ENCODE measurements at regions of chr1 and their contacts with region 1.

Region 1: DNA sequence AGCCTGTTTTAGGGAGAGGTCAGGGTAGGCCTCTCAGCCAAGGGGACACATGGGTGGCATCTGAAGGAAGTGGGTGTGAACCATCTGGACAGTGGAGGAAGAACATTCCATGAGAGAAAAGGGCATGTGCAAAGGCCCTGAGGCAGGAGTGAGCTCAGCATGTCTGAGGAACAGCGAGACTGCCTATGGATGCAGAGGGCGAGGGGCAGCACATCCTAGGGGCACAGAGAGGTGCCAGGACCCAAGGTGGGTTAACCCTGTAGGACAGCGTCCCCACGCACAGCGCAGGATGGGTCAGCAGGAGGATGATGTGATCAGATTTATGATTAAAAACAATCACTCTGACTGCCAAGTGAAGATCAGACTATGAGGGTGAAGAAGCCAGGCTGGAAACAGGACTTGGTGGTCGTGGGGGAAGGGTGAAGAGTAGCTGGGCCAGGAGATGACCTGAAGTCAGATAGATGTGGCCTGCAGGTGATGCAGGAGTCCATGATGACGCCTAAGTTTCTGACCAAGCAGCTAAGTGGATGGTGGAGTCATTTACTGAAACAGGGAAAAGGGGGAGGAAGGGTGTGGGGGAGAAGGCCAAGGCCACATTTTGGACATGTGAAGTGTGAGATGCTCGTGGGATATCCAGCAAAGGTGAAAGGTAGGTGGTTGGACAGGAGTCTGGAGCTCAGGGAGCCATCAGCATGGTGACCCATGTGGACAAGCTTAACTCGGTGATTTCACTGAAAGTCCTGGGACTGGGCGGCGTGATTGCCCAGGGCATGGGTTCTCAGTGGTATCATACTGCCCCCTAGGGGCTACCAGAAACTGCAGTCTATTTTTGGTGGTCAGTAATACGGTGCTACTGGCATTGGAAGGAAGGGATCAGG is 37.8 kb downstream of the PABPC4 start:
- DNase-seq: peak in 4 of 5 donors; percentile 71 to 72 (median 72)
- ATAC-seq: peak; percentile 76 to 86 (median 82)
- H3K4me3 ChIP-seq: no peak overlapping the region
- H3K27ac ChIP-seq: no peak overlapping the region
- H3K4me1 ChIP-seq: peaks cover 0 to 30% (median 12%) of the 10 kb centered on the region in 12 donors
- H3K27me3 ChIP-seq: no peaks in the 10 kb centered on the region
- CTCF ChIP-seq: peak; percentile 85 to 95 (median 92)
- POLR2A ChIP-seq: no peak

Region 2: GRCh38 chr1:39098546-39099250 is 440.1 kb before region 1 on chr1:
- intact Hi-C with region 1: loop called (anchors 2 to 10 kb)
- DNase-seq: peak in 4 of 5 donors; percentile 45 to 65 (median 46)
- ATAC-seq: peak; percentile 27 to 77 (median 70)
- H3K4me3 ChIP-seq: no peak overlapping the region
- H3K27ac ChIP-seq: no peak overlapping the region
- H3K4me1 ChIP-seq: peaks cover 0 to 28% (median 10%) of the 10 kb centered on the region in 12 donors
- H3K27me3 ChIP-seq: no peaks in the 10 kb centered on the region
- CTCF ChIP-seq: peak; percentile 57 to 82 (median 74)
- POLR2A ChIP-seq: no peak

Region 3: DNA sequence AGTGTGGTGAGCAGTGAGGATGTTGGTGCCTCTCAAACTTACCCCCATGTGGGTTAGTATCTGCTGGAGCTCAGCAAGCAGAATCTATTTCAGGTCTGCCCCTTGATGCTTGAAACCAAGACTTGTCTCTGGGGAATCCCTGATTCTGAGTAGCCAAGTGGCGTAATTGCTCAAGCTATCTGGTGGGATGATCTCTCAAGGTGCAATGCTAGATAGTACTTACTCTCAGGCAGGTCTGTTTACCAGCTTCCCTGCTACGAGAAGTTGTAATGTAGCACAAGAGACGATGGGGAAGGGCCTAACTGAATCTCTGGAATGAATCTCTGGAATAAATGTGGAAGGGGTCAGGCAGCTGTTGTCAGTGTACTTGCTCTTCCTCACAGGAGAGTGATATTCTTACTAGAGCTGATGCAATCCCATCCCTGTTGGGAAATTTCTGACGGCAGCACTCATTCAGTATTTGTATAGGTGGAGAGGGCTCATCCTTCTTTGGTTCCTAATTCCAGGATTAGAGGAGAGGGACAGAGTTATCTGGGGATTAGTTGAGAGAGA is 269.0 kb before region 1 on chr1:
- intact Hi-C with region 1: loop called in 1 of 10 experiments (anchors 10 kb)
- DNase-seq: no peak
- ATAC-seq: peak in 2 of 4 donors; percentile 14 to 22
- H3K4me3 ChIP-seq: peak overlapping the region in 3 of 12 donors; percentile 6 to 45 (median 22)
- H3K27ac ChIP-seq: peak overlapping the region in 6 of 12 donors; percentile 21 to 84 (median 66)
- H3K4me1 ChIP-seq: peaks cover 7 to 85% (median 69%) of the 10 kb centered on the region in 12 donors
- H3K27me3 ChIP-seq: no peaks in the 10 kb centered on the region
- CTCF ChIP-seq: no peak
- POLR2A ChIP-seq: no peak

Region 4: GRCh38 chr1:39344394-39345154 is 194.3 kb before region 1 on chr1:
- intact Hi-C with region 1: loop called in 2 of 10 experiments (anchors 10 kb)
- DNase-seq: no peak
- ATAC-seq: no peak
- H3K4me3 ChIP-seq: no peak overlapping the region
- H3K27ac ChIP-seq: no peak overlapping the region
- H3K4me1 ChIP-seq: no peaks in the 10 kb centered on the region
- H3K27me3 ChIP-seq: no peaks in the 10 kb centered on the region
- CTCF ChIP-seq: no peak
- POLR2A ChIP-seq: no peak

Region 5: DNA sequence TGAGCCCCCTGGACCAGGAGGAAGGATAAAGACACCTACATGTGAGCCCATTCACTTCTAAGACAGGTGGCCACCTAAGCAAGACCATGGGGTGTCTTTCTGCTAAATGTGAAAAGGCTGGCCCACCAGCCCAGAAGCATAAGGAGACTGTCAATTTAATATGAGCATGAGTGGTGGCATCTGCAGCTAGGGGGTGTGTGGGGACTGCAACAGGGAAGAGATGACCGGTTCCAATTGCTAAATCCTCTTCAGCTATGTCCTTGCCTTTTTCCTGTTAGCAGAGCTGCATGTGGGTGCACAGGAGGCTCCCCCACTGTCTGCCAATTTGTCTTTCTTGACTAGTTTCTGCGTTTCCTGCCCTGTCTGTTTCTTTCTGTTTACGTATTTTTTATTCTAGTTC is 69.7 kb before region 1 on chr1:
- intact Hi-C with region 1: loop called in 2 of 10 experiments (anchors 5 kb)
- DNase-seq: no peak
- ATAC-seq: peak in 1 of 4 donors; percentile 15
- H3K4me3 ChIP-seq: no peak overlapping the region
- H3K27ac ChIP-seq: no peak overlapping the region
- H3K4me1 ChIP-seq: peaks cover 0 to 9% (median under 1%) of the 10 kb centered on the region in 12 donors
- H3K27me3 ChIP-seq: no peaks in the 10 kb centered on the region
- CTCF ChIP-seq: no peak
- POLR2A ChIP-seq: no peak

Region 6: DNA sequence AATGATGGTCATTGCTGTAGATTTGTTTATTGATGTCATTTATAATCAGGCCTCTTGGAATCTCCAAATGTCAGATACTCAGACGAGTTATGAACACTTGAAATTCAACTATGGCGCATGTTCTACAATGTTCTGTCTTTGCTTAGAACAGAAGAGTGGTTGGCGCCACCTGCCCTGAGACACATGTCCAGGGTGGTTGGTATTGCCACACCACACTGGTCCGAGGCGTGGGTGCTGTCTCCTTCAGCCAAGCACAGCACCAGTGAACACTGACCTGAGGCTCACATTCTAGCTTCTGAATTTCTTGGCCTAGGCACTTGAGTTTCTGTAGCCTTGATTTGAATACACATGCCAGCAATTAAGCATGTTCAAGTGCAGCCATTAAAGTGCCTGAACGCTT is 57.5 kb before region 1 on chr1:
- intact Hi-C with region 1: loop called in 4 of 10 experiments (anchors 5 to 10 kb)
- DNase-seq: no peak
- ATAC-seq: peak in 1 of 4 donors; percentile 35
- H3K4me3 ChIP-seq: no peak overlapping the region
- H3K27ac ChIP-seq: no peak overlapping the region
- H3K4me1 ChIP-seq: peaks cover 0 to 12% (median 0%) of the 10 kb centered on the region in 12 donors
- H3K27me3 ChIP-seq: no peaks in the 10 kb centered on the region
- CTCF ChIP-seq: no peak
- POLR2A ChIP-seq: no peak

Measured in heart left ventricle (tissue), 16 donors.